ENCODE measurements at regions of chr3 and their contacts with region 1.

Region 1: GRCh38 chr3:185498503-185499396 is at the start of gene TMEM41A:
- DNase-seq: peak; percentile 92 to 94
- H3K4me3 ChIP-seq: peak within 1 kb of the TSS; percentile 80 to 92 (median 88)
- H3K27ac ChIP-seq: peak within 1 kb of the TSS; percentile 50 to 86 (median 80)
- H3K4me1 ChIP-seq: peaks cover 9 to 17% of the 10 kb centered on the region in 2 donors
- H3K27me3 ChIP-seq: no peaks in the 10 kb centered on the region
- CTCF ChIP-seq: peak in 1 of 6 experiments; percentile 6
- POLR2A ChIP-seq: peak in 1 of 2 donors; percentile 83
- total RNA-seq, gene TMEM41A: 9.9 to 16.9 (median 11.7) TPM

Region 2: GRCh38 chr3:185585859-185586685 is 87.3 kb after region 1 on chr3 and contains the start of gene SENP2:
- intact Hi-C with region 1: loop called (anchors 10 kb)
- DNase-seq: peak; percentile 99
- H3K4me3 ChIP-seq: peak within 1 kb of the TSS; percentile 55 to 98 (median 80)
- H3K27ac ChIP-seq: peak within 1 kb of the TSS; percentile 92 to 97 (median 96)
- H3K4me1 ChIP-seq: peaks cover 12 to 19% of the 10 kb centered on the region in 2 donors
- H3K27me3 ChIP-seq: no peaks in the 10 kb centered on the region
- CTCF ChIP-seq: peak in 1 of 6 experiments; percentile 10
- POLR2A ChIP-seq: peak; percentile 37 to 91
- total RNA-seq, gene SENP2: 34.0 to 82.9 (median 39.6) TPM